Activated CD4-positive, alpha-beta T cell treated with anti-CD3 and anti-CD28 coated beads, Interleukin-2, amount 10 ng/mL, durations not matched to agents 24 days and 14 days (primary cell): ENCODE measurements at regions of chr9 and their contacts with region 1.

Region 1: GRCh38 chr9:128723866-128724743 is at the start of gene ZDHHC12:
- DNase-seq: peak; percentile 100
- H3K4me3 Mint-ChIP-seq: peak within 1 kb of the TSS; percentile 99
- H3K27ac Mint-ChIP-seq: peak within 1 kb of the TSS; percentile 94
- H3K4me1 Mint-ChIP-seq: peaks cover 37% of the 10 kb centered on the region
- H3K27me3 Mint-ChIP-seq: no peaks in the 10 kb centered on the region
- total RNA-seq, gene ZDHHC12: 46.9 and 48.4 TPM in 2 replicates

Region 2: DNA sequence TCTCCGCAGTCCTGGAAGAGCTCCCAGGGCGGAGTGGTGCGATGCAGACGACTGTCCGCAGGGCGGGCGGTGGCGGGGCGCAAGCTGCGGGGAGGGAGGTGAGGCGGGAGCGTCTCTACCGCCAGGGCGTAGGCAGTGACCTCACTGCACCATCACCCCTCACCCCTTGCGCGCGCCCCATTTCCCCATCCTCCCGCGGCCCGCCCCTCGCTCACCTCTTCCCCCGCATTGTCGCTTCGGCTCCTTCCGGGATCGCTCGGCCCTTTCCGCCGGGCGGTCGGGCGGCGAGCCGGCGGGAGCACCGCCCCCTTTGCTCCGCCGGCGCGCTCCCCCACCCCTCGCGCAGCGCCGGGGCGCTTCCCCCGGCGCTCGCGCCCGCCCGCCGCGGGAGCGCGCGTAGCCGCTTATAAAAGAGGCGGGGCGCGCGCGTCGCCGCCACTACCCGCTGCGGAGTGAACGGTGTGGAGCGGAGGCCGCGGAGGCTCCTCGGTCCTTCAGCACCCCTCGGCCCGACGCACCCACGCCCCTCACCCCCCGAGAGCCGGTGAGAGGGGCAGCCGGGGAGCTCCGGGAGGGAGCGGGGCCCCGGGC is 171.9 kb before region 1 on chr9 and contains the start of gene SPTAN1:
- intact Hi-C with region 1: loop called (anchors 1 kb)
- DNase-seq: peak; percentile 99
- H3K4me3 Mint-ChIP-seq: no peak within 1 kb of the TSS
- H3K27ac Mint-ChIP-seq: peak within 1 kb of the TSS; percentile 98
- H3K4me1 Mint-ChIP-seq: peaks cover 36% of the 10 kb centered on the region
- H3K27me3 Mint-ChIP-seq: no peaks in the 10 kb centered on the region
- total RNA-seq, gene SPTAN1: 240 and 249 TPM in 2 replicates

Region 3: DNA sequence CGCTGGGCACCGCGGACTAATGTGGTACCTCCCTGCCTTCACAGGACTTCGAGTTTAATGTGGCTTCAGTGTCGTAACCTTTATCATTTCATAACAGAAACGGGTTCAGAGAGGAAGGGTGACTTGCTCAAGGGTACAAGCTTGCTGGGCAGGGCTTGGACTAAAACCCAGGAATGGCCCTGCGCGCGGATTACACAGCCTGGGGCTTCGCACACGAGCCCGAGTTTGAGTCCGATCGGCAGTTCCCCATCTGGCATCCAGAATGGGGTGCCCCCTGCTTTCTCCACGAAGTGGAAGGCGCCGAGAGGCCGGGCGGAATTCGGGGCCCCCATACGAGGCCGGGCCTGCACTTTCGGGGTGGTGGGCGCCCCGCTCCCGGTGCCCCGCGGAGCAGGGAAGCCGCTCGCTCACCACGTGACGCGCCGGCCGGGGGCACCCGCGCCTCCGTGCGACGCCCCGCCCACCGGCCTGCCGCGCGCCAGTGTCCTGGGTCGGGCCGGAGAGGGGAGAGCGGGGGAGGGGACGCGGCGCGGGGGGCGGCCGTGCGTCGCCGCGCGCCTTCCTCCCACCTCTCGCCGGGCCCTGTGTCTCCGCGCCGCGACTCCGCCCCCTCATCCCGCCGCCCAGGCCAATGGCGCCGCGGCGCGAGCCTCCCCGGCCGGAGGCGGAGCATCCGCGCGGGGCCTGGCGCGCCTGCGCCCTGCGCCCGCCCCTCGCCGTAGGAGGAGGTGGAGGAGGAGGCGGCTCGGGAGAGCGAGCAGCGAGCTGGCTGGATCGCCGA is 35.4 kb before region 1 on chr9 and contains the start of gene SET:
- intact Hi-C with region 1: loop called (anchors 1 kb)
- DNase-seq: peak; percentile 98
- H3K4me3 Mint-ChIP-seq: peak within 1 kb of the TSS; percentile 78
- H3K27ac Mint-ChIP-seq: peak within 1 kb of the TSS; percentile 93
- H3K4me1 Mint-ChIP-seq: peaks cover 57% of the 10 kb centered on the region
- H3K27me3 Mint-ChIP-seq: no peaks in the 10 kb centered on the region
- total RNA-seq, gene SET: 831 and 846 TPM in 2 replicates

Region 4: DNA sequence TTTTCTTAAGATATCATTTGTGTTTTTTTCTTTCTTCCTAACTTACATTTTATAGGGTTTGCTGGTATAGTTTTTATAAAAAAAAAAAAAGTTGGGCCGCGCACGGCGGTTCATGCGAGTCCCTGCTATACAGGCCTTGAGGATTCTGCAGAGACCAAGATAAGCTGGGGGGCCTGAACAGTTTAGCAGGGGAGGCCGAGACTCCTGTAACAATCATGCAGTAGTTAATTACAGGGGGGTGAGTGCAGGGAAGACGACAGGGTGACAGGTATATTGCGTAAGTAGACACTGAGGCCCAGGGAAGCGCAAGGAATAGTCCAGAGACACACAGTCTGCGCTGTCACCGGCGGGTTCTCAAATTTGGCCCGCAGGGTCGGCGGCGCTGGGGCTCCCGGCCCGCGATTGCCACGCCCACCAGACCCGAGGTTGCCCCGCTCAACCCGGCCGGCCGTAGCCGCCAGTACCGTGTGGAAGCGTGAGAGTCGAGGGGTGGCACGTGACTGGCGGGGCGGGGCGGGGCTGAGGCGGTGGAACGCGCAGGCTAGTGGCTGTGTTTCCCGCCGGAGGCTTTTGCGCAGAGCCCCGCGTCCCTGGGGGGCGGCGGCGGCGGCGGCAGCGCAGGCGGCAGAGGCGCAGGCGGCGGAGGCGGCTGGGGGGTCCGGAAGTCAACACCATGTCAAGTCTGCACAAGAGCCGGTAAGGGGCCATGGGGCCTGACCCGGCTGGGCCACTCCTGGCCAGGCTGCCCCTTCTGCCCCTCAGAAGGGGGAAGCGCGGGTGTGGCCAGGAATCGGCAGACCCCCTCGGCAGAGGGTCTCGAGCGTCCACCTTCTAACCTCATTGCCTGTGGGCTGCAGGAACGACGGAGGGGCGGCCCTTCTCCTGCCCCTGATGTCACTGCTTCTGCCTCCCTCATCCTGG is 62.8 kb after region 1 on chr9 and contains the start of gene TBC1D13:
- intact Hi-C with region 1: loop called (anchors 2 kb)
- DNase-seq: peak; percentile 97
- H3K4me3 Mint-ChIP-seq: peak within 1 kb of the TSS; percentile 95
- H3K27ac Mint-ChIP-seq: peak within 1 kb of the TSS; percentile 91
- H3K4me1 Mint-ChIP-seq: peaks cover 19% of the 10 kb centered on the region
- H3K27me3 Mint-ChIP-seq: no peaks in the 10 kb centered on the region
- total RNA-seq, gene TBC1D13: 19.2 and 19.9 TPM in 2 replicates

Region 5: GRCh38 chr9:128829477-128830251 is 105.6 kb after region 1 on chr9 and contains the start of gene SPOUT1:
- intact Hi-C with region 1: loop called (anchors 1 kb)
- DNase-seq: peak; percentile 99
- H3K4me3 Mint-ChIP-seq: peak within 1 kb of the TSS; percentile 97
- H3K27ac Mint-ChIP-seq: peak within 1 kb of the TSS; percentile 93
- H3K4me1 Mint-ChIP-seq: peaks cover 10% of the 10 kb centered on the region
- H3K27me3 Mint-ChIP-seq: no peaks in the 10 kb centered on the region
- total RNA-seq, gene SPOUT1: 149 and 154 TPM in 2 replicates

Region 6: GRCh38 chr9:128845155-128845931 is 121.2 kb after region 1 on chr9:
- intact Hi-C with region 1: no loop called
- DNase-seq: no peak
- H3K4me3 Mint-ChIP-seq: no peak overlapping the region
- H3K27ac Mint-ChIP-seq: no peak overlapping the region
- H3K4me1 Mint-ChIP-seq: no peaks in the 10 kb centered on the region
- H3K27me3 Mint-ChIP-seq: no peaks in the 10 kb centered on the region